A673 (cell line): ENCODE measurements at regions of chr14 and their contacts with region 1.

Region 1: GRCh38 chr14:60275942-60276341 is 26.9 kb downstream of the PPM1A start:
- DNase-seq: no peak
- H3K4me3 ChIP-seq: no peak overlapping the region
- H3K27ac ChIP-seq: no peak overlapping the region
- H3K4me1 ChIP-seq: peaks cover 16% of the 10 kb centered on the region
- H3K27me3 ChIP-seq: no peaks in the 10 kb centered on the region
- CTCF ChIP-seq: no peak

Region 2: DNA sequence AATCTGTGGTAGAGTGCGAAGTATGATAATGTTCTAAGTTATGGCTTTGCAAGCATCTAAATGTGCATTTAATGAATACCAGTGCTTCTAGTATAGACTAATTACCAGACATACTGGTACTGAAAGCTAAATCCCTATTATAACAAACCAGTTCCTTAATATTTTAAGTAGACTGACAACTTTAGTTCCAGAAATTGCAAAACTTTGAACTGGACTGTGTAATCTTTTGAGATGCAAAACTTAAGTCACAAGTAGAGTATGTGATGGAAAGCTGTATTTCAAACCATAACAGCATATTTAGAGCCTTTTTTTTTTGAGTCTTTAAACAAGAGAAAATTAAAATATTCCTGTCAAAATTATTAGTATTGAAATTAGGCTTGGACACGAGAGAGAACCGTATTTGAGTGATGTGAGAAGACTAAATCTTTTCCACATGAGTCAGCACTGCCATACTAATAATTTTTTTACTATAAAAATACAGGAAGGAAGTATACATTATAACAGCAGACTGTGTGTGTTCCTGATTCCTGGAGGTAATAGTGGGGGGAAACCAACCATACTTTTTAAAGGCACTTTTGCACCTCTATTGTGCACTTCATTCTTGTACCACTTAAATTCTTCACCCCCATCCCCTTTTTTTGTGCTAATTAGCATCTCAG is 18.6 kb after region 1 on chr14:
- CTCF ChIA-PET with region 1: interaction called, 10 read pairs
- POLR2A ChIA-PET with region 1: no interaction called
- intact Hi-C with region 1: no loop called
- DNase-seq: peak; percentile 45
- H3K4me3 ChIP-seq: no peak overlapping the region
- H3K27ac ChIP-seq: peak overlapping the region; percentile 71
- H3K4me1 ChIP-seq: peaks cover 30% of the 10 kb centered on the region
- H3K27me3 ChIP-seq: no peaks in the 10 kb centered on the region
- CTCF ChIP-seq: no peak